PC-9 (cell line): ENCODE measurements at regions of chr7 and their contacts with region 1.

Region 1: GRCh38 chr7:10412422-10413019 is 561.2 kb upstream of the PHF14 start:
- DNase-seq: no peak
- H3K4me3 ChIP-seq: no peak overlapping the region
- H3K27ac ChIP-seq: no peak overlapping the region
- H3K4me1 ChIP-seq: no peaks in the 10 kb centered on the region
- H3K27me3 ChIP-seq: no peaks in the 10 kb centered on the region
- CTCF ChIP-seq: peak; percentile 84

Region 2: DNA sequence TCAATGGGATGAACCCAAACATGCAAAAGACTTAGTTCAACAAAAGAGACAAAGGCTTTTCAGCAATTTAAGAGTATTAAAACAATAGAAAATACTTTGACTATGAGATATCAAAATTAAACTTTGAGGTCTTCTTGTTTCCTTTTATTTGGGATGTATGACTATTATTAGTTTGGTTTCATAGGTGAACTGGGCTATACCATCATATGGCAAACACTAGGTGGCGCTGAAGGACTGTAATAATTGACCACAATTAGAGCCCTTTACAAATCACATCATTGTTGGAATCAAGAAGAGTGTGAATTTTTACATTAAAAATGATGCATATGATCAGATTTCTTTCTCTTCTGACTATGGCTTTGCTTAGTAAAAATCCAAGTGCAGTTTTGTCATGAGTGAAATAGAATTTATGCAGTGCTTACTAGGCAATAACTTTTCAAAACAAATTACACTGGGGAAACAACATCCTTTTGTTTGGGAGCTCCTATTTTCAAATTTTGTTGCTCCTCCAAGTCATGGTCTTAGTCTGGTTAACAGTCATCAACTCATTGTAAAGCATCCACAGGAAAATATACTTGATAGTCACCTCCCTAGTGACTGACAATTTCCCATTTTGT is 1993.8 kb before region 1 on chr7:
- CTCF ChIA-PET with region 1: no interaction called
- POLR2A ChIA-PET with region 1: no interaction called
- intact Hi-C with region 1: loop called (anchors 2 kb)
- DNase-seq: peak; percentile 44 to 62
- H3K4me3 ChIP-seq: no peak overlapping the region
- H3K27ac ChIP-seq: no peak overlapping the region
- H3K4me1 ChIP-seq: no peaks in the 10 kb centered on the region
- H3K27me3 ChIP-seq: peaks cover 8% of the 10 kb centered on the region; the same call in 1 of the 2 replicates
- CTCF ChIP-seq: peak; percentile 90

Region 3: GRCh38 chr7:9890092-9890491 is 522.4 kb before region 1 on chr7:
- CTCF ChIA-PET with region 1: no interaction called
- POLR2A ChIA-PET with region 1: no interaction called
- intact Hi-C with region 1: no loop called
- DNase-seq: no peak
- H3K4me3 ChIP-seq: no peak overlapping the region
- H3K27ac ChIP-seq: no peak overlapping the region
- H3K4me1 ChIP-seq: no peaks in the 10 kb centered on the region
- H3K27me3 ChIP-seq: no peaks in the 10 kb centered on the region
- CTCF ChIP-seq: no peak